Mammary epithelial cell (primary cell): ENCODE measurements at regions of chr13 and their contacts with region 1.

Region 1: GRCh38 chr13:71274923-71275608 is 591.9 kb downstream of the DACH1 start:
- DNase-seq: no peak
- H3K4me3 ChIP-seq: no peak overlapping the region
- H3K27ac ChIP-seq: no peak overlapping the region
- H3K4me1 ChIP-seq: no peaks in the 10 kb centered on the region
- H3K27me3 ChIP-seq: no peaks in the 10 kb centered on the region
- CTCF ChIP-seq: no peak

Region 2: GRCh38 chr13:71240911-71241310 is 34.2 kb before region 1 on chr13:
- CTCF ChIA-PET with region 1: interaction called, 10 read pairs
- dilution Hi-C with region 1: no loop called
- in situ Hi-C with region 1: no loop called
- intact Hi-C with region 1: no loop called
- DNase-seq: no peak
- H3K4me3 ChIP-seq: no peak overlapping the region
- H3K27ac ChIP-seq: no peak overlapping the region
- H3K4me1 ChIP-seq: no peaks in the 10 kb centered on the region
- H3K27me3 ChIP-seq: no peaks in the 10 kb centered on the region
- CTCF ChIP-seq: peak; percentile 15 to 63